Aorta (tissue), 5 donors: ENCODE measurements at regions of chr6 and their contacts with region 1.

Region 1: GRCh38 chr6:74780831-74781230 is 425.0 kb downstream of the COL12A1 start:
- DNase-seq: no peak
- ATAC-seq: no peak
- H3K4me3 ChIP-seq: no peak overlapping the region
- H3K27ac ChIP-seq: no peak overlapping the region
- H3K4me1 ChIP-seq: no peaks in the 10 kb centered on the region
- H3K27me3 ChIP-seq: no peaks in the 10 kb centered on the region

Region 2: GRCh38 chr6:74857157-74857556 is 76.3 kb after region 1 on chr6:
- intact Hi-C with region 1: no loop called
- DNase-seq: no peak
- ATAC-seq: no peak
- H3K4me3 ChIP-seq: no peak overlapping the region
- H3K27ac ChIP-seq: no peak overlapping the region
- H3K4me1 ChIP-seq: no peaks in the 10 kb centered on the region
- H3K27me3 ChIP-seq: no peaks in the 10 kb centered on the region

Region 3: DNA sequence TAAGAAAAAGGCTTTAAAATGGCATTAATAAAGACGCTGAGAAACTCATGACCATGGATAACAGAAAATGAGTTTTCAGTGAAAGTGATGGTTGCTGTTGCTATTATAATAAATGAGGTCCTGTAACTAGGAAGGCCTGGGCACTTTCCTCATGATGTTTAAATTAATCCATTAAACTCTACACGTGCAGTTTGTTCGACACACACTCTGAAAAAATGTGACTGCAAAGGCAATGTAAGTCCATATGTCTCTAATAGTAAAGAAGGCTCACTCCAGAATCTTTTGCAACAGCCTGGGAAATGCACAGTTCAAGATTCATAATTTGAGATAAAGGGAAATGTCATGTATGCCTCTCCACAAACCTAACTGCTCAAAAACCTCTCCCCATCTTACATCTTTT is 271.7 kb after region 1 on chr6:
- intact Hi-C with region 1: loop called in 1 of 2 experiments (anchors 10 kb)
- DNase-seq: no peak
- ATAC-seq: no peak
- H3K4me3 ChIP-seq: no peak overlapping the region
- H3K27ac ChIP-seq: no peak overlapping the region
- H3K4me1 ChIP-seq: no peaks in the 10 kb centered on the region
- H3K27me3 ChIP-seq: no peaks in the 10 kb centered on the region